OCI-LY7 (cell line): ENCODE measurements at regions of chr18 and their contacts with region 1.

Region 1: GRCh38 chr18:80157708-80158343 is 48.8 kb downstream of the ADNP2 start:
- DNase-seq: peak; percentile 46
- H3K4me3 ChIP-seq: no peak overlapping the region
- H3K27ac ChIP-seq: no peak overlapping the region
- H3K4me1 ChIP-seq: no peaks in the 10 kb centered on the region
- CTCF ChIP-seq: peak; percentile 80

Region 2: DNA sequence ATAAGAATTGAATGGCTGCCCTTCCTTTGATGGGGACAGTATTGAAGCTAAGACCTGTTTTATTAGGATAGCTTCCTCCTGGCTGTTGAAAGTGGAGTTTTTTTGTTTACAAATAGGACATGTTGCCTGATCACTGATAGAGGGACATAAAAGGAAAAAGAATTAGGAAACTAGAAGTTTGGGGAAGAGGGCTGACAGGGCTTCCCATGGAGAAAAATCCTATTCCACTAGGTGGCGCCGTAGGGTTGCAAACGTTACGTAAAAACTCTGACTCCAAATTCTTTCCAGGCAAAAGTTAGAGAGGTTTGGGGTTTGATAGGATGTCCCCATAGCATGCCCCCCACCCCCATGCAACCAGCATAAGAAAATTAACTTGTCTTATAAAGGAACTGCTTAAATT is 134.7 kb before region 1 on chr18:
- CTCF ChIA-PET with region 1: no interaction called
- POLR2A ChIA-PET with region 1: no interaction called
- intact Hi-C with region 1: loop called (anchors 10 kb)
- DNase-seq: peak; percentile 19
- H3K4me3 ChIP-seq: no peak overlapping the region
- H3K27ac ChIP-seq: no peak overlapping the region
- H3K4me1 ChIP-seq: no peaks in the 10 kb centered on the region
- CTCF ChIP-seq: peak; percentile 75

Region 3: DNA sequence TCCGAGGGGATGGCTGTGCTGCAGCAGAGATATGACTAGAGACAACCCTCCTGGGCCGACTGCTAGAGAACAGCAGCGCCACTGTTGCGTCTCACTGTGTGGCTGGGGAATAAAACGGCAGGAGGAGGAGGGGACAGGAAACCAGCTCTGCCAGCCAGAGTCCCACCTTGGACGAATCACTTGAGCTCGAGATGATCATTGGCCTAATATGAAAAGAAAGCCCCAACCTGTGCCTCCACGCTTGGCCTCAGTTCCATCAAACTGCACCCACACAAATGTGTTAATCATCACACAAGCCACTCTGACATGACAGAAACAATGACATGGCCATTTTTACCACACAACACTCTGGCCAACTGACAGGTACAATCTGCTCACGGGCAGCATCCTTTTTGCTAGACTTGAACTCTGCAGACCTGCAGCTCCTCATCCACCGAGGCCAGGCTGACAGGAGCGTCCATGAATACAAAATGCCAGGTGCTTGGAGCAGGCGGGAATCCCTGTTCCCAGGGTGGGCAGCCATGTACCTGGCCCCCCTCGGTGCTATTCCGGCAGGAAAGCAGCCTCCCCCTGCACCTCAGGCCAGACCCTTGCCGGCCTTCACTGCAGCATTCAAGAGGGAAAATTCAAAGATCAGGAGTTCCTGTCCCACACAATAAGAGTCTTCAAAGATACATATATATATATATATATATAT is 37.2 kb after region 1 on chr18:
- CTCF ChIA-PET with region 1: no interaction called
- POLR2A ChIA-PET with region 1: no interaction called
- intact Hi-C with region 1: no loop called
- DNase-seq: no peak
- H3K4me3 ChIP-seq: no peak overlapping the region
- H3K27ac ChIP-seq: no peak overlapping the region
- H3K4me1 ChIP-seq: no peaks in the 10 kb centered on the region
- CTCF ChIP-seq: no peak